Endothelial cell of umbilical vein (primary cell): ENCODE measurements at regions of chr21 and their contacts with region 1.

Region 1: GRCh38 chr21:29245104-29245643 is 53.5 kb upstream of the BACH1 start:
- DNase-seq: no peak
- H3K4me3 ChIP-seq: no peak overlapping the region
- H3K27ac ChIP-seq: no peak overlapping the region
- H3K4me1 ChIP-seq: no peaks in the 10 kb centered on the region
- H3K27me3 ChIP-seq: no peaks in the 10 kb centered on the region
- CTCF ChIP-seq: no peak
- POLR2A ChIP-seq: no peak

Region 2: DNA sequence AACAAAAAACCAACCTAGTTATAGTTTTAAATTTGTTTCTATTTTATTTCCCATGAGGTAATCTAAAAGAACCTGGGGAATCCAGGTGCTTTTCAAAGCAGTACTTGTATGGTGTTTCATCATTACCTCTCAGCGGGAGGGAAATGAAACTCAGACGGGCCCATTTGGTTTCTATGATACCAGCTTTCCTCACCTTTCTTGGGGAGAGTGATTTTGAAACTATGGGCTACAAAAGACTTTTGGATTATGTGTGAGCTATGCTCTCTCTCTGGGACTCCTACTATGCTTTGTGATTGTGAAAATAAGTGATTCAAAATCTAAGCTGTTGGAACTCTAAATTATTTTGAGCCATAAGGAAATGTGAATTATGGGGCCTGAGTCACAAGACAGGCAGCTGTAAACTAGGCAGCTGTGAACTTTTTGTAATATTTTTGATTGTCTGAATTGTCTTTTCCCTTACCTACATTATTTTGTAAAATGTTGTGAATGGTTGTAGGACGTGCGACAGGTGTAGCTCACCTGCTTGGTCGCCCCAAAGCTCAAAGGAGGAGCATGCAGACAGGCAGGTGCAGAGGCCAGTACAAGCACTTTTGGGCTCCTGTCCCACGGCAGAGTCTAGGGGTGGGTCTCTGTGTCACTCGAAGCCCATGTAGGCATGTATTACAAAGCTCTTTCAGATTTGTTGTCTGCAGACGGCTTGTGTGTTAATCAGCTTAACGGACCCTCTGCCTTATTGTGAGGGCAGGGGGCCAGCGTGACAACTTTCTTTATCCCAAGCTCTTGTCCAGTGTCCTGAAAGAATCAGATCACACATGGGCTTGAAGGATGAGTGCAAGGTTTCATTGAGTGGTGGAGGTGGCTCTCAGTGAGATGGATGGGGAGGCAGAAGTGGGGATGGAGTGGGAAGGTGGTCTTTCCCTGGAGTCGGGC is 11.3 kb before region 1 on chr21:
- CTCF ChIA-PET with region 1: interaction called, 12 read pairs
- POLR2A ChIA-PET with region 1: no interaction called
- dilution Hi-C with region 1: no loop called
- intact Hi-C with region 1: no loop called
- DNase-seq: no peak
- H3K4me3 ChIP-seq: no peak overlapping the region
- H3K27ac ChIP-seq: no peak overlapping the region
- H3K4me1 ChIP-seq: peaks cover 18% of the 10 kb centered on the region
- H3K27me3 ChIP-seq: no peaks in the 10 kb centered on the region
- CTCF ChIP-seq: no peak
- POLR2A ChIP-seq: no peak